ENCODE measurements at regions of chr6 and their contacts with region 1.

Region 1: DNA sequence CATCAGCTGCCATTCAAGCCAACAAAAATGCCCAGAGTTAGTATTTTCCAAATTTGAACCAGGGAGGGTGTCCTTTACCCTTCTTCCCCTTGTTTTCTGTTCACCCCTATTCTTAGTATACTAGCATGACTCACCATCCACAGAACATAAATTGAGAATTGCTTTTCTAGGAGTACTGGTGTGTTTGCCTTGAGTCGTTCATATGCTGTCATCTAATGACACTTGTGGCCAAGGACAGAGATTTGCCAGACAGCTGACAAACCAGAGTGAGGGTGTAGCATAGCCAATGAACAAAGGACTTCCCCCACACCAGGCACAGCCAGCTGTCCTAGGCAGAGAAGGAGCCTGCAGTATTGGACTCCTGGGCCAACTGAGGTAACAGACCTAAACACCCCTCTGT is 62.2 kb downstream of the FILIP1 start:
- DNase-seq: peak in 4 of 5 donors; percentile 47 to 78 (median 68)
- ATAC-seq: peak; percentile 91 to 98 (median 96)
- H3K4me3 ChIP-seq: no peak overlapping the region
- H3K27ac ChIP-seq: peak overlapping the region; percentile 23 to 80 (median 66)
- H3K4me1 ChIP-seq: peaks cover 6 to 79% (median 52%) of the 10 kb centered on the region in 12 donors
- H3K27me3 ChIP-seq: no peaks in the 10 kb centered on the region
- CTCF ChIP-seq: no peak
- POLR2A ChIP-seq: no peak

Region 2: DNA sequence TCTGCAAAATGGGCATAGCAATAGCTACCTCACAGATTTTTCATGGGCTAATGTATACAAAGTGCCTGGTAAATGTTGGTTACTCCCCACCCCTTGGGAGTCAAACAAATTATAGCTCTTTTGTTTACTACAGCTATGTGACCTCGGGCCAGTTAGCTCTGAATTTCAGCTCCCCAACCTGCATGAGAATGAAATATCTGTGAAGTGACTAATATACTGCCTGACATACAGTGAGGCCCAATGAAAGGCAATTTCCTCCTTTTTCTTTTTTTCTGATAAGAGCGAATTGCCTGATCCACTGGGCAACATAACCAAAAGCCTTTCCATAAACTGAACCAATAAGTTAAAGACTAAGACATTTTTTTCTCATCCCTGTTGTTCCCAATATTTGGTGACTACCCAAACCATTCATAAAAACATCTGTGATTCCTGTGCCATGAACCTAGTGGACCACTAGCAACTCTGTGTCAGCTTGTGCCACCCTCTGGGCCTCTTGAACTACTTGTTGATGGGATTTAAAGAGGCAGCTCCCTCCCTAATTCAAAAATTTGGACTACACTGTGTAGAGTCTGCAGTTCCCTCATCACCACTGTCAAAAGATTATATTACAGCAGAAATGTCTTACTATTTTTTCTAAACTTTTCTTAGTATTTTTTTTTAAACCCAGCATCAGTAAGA is 54.9 kb before region 1 on chr6:
- intact Hi-C with region 1: loop called in 1 of 10 experiments (anchors 10 kb)
- DNase-seq: no peak
- ATAC-seq: no peak
- H3K4me3 ChIP-seq: no peak overlapping the region
- H3K27ac ChIP-seq: no peak overlapping the region
- H3K4me1 ChIP-seq: peaks cover 0 to 32% (median 20%) of the 10 kb centered on the region in 12 donors
- H3K27me3 ChIP-seq: no peaks in the 10 kb centered on the region
- CTCF ChIP-seq: no peak
- POLR2A ChIP-seq: no peak

Region 3: DNA sequence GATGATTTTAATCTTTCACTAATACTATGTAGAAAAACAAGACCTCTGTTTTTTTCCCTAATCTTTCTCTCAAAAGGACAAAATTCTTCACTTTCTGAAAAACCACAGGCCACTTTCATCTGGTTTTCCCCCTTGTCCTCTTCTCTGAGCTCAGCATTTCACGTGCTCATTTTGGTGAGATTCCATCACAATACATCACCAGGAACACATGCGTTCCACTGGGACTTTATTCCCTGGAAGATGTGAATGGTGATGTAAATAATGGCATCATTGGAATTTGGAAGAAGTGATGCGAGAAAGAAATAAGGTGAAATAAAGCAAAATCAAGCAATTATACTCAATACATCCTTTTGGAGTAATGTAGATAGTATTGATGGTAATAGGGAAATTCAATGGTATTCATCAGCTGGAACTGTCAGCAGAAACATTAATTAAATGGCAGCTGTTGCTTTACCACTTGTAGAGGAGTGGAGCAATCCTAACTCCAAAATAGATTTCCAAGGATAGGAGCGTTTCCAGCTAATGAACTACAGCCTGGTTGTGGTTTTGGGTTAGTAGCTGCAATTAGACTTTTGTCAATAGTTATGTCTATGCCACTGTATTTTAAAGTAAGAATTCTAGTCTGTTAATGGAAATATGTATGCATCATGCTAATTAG is 50.7 kb after region 1 on chr6:
- intact Hi-C with region 1: loop called in 2 of 10 experiments (anchors 2 to 5 kb)
- DNase-seq: no peak
- ATAC-seq: peak in 3 of 4 donors; percentile 32 to 69 (median 57)
- H3K4me3 ChIP-seq: no peak overlapping the region
- H3K27ac ChIP-seq: peak overlapping the region; percentile 1 to 87 (median 64)
- H3K4me1 ChIP-seq: peaks cover 3 to 84% (median 68%) of the 10 kb centered on the region in 12 donors
- H3K27me3 ChIP-seq: no peaks in the 10 kb centered on the region
- CTCF ChIP-seq: no peak
- POLR2A ChIP-seq: no peak

Region 4: DNA sequence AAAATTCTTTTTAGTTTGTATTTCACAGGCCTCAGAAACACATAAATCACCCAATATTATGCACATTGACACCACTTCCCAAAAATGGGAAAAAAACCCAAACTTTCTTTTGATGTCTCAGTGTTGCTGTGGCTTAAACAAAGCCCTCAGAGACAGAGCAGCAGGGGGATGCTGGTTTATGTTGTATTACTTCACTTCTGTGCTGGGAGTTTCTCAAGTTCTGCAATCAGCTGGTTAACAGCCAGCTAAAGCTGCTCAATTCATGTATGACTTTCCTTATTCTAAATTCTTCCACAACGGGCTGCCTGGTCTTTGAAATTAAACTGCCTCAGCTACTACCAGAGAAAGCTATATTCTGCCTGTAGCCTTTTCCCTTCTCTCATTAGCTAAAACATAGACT is 56.7 kb after region 1 on chr6:
- intact Hi-C with region 1: loop called in 6 of 10 experiments (anchors 2 to 10 kb)
- DNase-seq: no peak
- ATAC-seq: peak in 1 of 4 donors; percentile 12
- H3K4me3 ChIP-seq: peak overlapping the region in 9 of 12 donors; percentile 27 to 68 (median 64)
- H3K27ac ChIP-seq: peak overlapping the region; percentile 45 to 95 (median 90)
- H3K4me1 ChIP-seq: peaks cover under 1 to 61% (median 33%) of the 10 kb centered on the region in 12 donors
- H3K27me3 ChIP-seq: no peaks in the 10 kb centered on the region
- CTCF ChIP-seq: no peak
- POLR2A ChIP-seq: no peak

Region 5: DNA sequence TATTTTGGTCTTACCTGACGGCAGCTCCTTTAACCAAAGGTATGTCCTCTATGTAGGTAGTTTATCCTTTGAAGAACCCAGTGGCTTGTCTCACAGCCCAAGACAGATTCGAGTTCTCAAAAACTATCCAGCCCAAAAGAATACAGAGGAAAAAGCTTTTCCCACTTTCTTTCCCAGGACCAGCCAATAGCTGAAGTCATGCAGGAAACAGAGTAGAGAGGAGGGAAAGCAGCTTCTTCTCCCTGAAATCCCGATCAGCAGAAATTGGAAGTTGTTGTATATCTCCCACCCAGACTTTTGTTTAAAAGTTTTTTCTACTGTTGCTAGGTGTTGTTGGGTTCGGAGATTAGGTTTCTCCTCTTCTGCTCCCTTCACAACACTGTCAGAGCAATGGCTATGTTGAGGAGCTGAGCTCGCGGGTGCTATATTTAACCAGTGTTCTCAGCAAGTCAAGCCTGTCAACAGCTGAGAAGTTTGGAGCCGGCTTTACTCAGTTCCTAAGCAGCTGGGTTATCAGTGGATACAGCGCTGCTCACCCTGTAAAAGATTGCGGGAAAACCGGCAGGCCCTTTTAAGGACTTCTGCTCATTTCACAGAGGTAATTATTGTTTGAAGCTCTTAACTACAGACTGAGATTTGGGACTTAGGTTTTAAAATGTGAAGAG is 62.2 kb after region 1 on chr6 and contains the start of gene FILIP1:
- intact Hi-C with region 1: loop called in 5 of 10 experiments (anchors 5 to 10 kb)
- DNase-seq: peak; percentile 62 to 85 (median 83)
- ATAC-seq: peak; percentile 88 to 95 (median 88)
- H3K4me3 ChIP-seq: peak within 1 kb of the TSS; percentile 10 to 68 (median 60)
- H3K27ac ChIP-seq: peak within 1 kb of the TSS; percentile 79 to 95 (median 92)
- H3K4me1 ChIP-seq: peaks cover 0 to 50% (median 28%) of the 10 kb centered on the region in 12 donors
- H3K27me3 ChIP-seq: no peaks in the 10 kb centered on the region
- CTCF ChIP-seq: no peak
- POLR2A ChIP-seq: peak; percentile 66 to 85
- total RNA-seq, gene FILIP1: 91.1 to 230 (median 177) TPM

Region 6: DNA sequence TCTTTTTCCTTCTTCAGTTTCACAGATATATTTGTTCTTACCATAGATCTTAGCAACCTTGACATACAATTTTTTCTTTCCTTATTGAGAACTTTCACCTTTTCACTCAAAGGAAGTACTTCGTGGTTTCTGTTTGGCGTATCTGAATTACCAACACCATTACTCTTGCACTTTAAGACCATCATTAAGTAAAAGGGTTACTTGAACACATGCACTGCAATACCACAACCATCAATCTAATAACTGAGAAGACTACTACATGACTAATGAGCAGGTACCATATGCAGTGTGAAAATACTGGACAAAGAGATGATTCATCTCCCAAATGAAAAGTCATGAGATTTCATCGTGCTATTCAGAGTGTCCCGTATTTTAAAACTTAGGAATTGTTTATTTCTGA is 148.6 kb after region 1 on chr6:
- intact Hi-C with region 1: no loop called
- DNase-seq: no peak
- ATAC-seq: no peak
- H3K4me3 ChIP-seq: no peak overlapping the region
- H3K27ac ChIP-seq: no peak overlapping the region
- H3K4me1 ChIP-seq: no peaks in the 10 kb centered on the region
- H3K27me3 ChIP-seq: no peaks in the 10 kb centered on the region
- CTCF ChIP-seq: no peak
- POLR2A ChIP-seq: no peak